HEK293 (cell line): ENCODE measurements at regions of chr19 and their contacts with region 1.

Region 1: DNA sequence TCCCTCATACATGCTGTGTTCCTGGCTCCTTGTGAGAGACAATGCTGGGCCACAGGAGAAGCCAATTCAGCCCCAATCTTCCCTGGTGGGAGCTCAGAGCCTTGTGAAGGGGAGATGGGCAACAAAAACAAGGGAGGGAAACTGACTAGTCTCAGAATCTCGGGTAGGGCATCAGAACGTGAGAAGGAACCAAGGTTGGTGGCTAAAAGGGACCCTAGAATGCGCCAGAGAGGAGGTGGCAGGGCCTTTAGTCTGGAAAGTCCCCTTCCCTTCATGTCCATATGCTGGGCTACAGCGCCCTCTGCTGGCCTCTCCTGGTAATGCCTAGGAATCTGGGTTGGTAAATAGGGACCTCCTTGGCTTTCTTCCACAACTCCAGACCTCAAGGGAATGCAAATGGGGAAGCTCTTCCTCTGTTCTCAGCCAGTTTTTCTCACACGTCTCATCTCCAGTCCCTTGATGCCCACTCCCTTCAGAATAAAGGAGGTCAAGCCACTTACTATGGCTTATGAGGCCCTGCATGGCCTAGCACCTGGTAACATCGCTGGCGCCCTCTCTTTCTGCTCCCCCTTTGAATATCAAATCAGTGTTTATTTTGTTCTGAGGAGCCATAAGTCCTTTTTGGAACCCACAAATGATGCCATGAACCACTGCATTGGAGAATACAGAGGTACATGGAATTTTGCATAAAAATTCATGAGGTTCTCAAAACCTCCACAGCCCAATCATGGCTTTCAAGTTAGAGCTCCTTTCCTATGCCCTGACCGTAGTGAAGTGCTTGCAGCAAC is 1.4 kb upstream of the CCDC97 start:
- H3K4me3 ChIP-seq: no peak overlapping the region
- H3K27ac ChIP-seq: peak overlapping the region; percentile 98
- H3K4me1 ChIP-seq: peaks cover 20% of the 10 kb centered on the region
- CTCF ChIP-seq: peak; percentile 96

Region 2: DNA sequence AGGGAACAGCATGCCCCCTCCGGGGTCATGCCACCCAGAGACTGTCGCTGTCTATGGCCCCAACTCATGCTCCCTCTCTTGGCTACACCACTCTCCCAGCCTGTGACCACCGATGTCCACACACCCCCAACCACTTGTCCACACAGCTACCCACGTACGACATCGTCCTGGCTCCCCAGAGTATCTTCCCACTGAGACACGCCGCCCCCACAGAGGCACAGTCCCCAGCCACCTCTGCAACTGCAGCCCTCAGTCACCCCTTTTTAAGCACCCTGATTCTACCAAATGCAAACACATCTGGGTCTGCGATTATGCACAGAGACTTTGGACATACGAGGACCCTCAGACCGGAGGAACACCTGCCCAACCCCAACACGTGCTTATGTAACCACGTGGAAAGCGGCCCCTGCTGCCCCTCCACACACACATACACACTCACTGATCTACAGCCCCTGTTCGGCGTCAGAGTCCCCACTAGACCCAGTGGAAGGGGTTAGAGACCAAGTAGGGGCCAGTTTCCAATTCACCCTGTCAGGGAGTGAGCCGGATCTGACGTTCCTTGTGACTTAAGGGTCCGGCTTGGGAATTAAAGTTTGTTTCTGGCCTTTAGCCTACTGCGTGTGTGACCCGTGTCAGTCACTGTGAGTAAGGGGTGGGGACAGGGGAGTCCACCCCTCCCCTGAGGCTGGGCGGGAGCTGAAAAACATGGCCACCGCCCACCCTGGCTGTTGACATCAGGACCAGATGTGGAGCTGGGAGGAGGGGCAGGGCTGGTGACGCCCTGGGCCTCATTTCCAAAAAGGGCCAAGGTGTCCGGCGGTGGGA is 101.4 kb before region 1 on chr19:
- CTCF ChIA-PET with region 1: interaction called, 40 read pairs
- POLR2A ChIA-PET with region 1: interaction called, 17 read pairs
- H3K4me3 ChIP-seq: no peak overlapping the region
- H3K27ac ChIP-seq: no peak overlapping the region
- H3K4me1 ChIP-seq: no peaks in the 10 kb centered on the region
- CTCF ChIP-seq: no peak

Region 3: GRCh38 chr19:41288673-41289505 is 19.7 kb before region 1 on chr19:
- CTCF ChIA-PET with region 1: interaction called, 120 read pairs
- POLR2A ChIA-PET with region 1: interaction called, 3 read pairs
- H3K4me3 ChIP-seq: no peak overlapping the region
- H3K27ac ChIP-seq: peak overlapping the region; percentile 36; the same call in 1 of the 2 replicates
- H3K4me1 ChIP-seq: no peaks in the 10 kb centered on the region
- CTCF ChIP-seq: no peak

Region 4: DNA sequence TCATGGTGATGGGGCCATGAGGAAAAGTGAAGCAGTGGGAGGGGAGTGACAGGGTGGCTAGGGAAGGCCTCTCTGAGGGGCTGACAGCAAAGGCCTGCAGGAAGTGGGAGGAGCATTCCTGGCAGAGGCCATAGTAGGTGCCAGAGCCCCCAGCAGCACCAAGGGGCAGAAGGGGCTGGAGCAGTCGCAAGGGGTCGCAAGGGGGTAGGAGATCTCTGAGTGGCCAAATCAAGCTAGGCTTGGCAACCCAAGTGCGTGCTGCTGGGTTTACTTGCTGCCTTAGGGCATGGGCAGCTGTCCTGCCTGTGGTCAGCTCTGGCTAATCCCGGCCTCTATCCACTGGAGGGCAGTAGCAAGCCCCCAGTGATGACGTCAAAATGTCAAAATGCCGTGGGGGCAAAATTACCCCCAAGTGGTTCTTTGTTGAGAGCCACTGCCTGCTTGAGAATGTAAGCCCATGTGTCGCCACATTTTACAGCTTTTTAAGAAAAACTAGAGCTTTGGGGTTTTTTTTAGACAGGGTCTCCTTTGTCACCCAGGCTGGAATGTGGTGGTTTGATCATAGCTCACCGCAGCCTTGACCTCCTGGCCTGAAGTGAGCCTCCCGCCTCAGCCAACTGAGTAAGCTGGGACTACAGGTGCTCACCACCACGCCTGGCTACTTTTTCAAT is 13.1 kb after region 1 on chr19:
- CTCF ChIA-PET with region 1: interaction called, 11 read pairs
- POLR2A ChIA-PET with region 1: interaction called, 4 read pairs
- H3K4me3 ChIP-seq: no peak overlapping the region
- H3K27ac ChIP-seq: no peak overlapping the region
- H3K4me1 ChIP-seq: peaks cover 22% of the 10 kb centered on the region
- CTCF ChIP-seq: peak; percentile 76

Region 5: DNA sequence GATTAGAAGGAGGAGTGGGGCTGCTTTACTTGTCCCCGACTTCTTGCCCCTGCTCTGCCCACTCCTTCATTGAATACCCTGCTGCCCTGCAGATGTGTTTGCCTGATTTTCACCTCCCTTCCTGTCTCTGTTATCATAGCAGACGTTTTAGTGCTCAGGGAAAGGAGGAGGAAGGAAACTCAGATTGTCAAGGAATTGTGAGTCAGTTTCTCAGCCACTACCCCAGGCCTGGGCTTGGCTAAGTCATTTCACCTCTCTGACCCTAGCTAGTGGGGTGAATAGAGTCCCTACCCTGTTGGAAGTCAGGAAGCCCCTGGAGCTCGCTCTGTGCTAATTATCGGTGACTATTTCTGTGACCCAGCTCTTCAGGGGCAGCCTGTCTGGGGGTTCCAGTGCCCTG is 92.9 kb after region 1 on chr19:
- CTCF ChIA-PET with region 1: no interaction called
- POLR2A ChIA-PET with region 1: no interaction called
- H3K4me3 ChIP-seq: no peak overlapping the region
- H3K27ac ChIP-seq: no peak overlapping the region
- H3K4me1 ChIP-seq: peaks cover 10% of the 10 kb centered on the region; the same call in 1 of the 2 replicates
- CTCF ChIP-seq: no peak

Region 6: DNA sequence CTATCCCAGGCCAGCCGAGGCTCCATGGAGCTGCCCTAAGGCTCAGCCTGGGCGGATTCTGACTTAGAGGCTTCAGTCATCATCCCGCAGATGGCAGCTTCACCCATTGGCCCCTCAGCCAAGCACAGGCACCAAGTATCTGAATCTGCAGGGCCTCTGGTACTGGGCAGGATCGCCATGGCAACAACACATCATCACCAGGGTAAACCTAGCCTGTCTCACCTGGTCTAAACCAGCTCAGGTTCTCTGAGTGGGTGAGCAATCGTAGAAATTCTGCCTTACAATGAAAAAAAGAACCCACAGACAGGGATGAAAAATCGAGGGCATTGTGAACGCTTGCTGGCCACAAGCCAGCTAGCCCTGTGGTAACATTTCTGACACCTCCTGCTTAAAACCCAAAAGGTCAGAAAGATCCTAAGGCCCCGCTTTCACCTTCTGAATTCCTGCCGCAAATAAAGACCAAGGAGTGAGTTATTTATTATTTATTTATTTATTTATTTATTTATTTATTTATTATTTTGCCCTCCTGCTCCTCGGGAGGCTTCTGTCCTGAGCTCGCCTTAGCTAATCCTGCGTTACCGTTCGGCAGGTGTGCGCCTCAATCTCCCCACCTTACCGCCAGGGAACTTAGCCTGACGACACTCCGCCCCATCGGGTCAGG is 255.4 kb after region 1 on chr19:
- CTCF ChIA-PET with region 1: interaction called, 15 read pairs
- POLR2A ChIA-PET with region 1: no interaction called
- H3K4me3 ChIP-seq: no peak overlapping the region
- H3K27ac ChIP-seq: no peak overlapping the region
- H3K4me1 ChIP-seq: peaks cover 3% of the 10 kb centered on the region
- CTCF ChIP-seq: no peak